RWPE1 (cell line): ENCODE measurements at regions of chr2 and their contacts with region 1.

Region 1: DNA sequence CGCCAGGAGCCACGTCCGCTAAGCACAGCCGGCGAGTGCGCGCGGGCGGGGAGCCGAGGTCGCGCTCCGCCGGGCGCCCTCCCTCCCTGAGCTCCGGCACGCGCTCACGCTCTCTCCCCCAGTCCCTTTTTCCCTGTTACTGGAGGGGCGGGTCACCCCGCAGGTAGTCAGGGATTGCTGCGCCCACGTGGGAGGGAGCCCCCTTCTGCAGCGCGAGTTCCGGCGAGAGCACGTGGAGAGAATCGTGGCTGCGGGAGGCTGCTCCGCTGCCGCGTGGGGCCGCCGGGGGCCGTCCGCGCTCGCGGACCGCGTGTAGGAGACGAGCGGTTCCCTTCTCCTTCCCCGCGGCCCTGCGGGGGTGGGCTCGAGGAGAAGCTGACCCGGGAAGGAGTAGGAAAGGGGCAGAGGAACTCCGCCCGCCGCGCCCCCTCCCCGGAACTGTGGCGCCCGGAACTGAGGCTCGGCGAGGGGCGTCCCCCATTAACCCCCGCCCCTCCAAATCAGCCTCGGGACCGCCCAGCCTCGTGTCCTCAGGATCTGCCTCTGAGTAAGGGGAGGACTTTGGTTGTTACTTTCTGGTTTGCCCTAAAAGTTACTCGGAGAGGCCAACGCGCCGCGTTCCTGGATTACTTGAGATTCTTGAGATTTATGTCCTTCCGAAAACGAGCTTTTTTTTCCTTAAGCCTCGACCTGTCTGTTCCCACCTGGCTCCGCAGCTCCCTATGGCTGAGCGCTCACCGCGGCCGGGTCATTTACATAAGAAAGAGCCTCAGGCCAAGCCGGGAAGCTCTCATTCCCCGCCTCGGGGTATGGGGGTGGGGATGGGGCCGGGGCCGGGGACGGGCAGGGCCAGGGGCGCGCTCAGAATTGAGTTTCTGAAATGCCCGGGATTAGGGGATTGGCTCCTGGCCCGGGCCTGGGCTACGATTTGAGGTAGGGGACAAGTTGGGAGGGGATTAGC is 1.1 kb downstream of the HK2 start:
- DNase-seq: peak; percentile 78
- H3K27ac ChIP-seq: peak overlapping the region; percentile 80
- CTCF ChIP-seq: no peak

Region 2: DNA sequence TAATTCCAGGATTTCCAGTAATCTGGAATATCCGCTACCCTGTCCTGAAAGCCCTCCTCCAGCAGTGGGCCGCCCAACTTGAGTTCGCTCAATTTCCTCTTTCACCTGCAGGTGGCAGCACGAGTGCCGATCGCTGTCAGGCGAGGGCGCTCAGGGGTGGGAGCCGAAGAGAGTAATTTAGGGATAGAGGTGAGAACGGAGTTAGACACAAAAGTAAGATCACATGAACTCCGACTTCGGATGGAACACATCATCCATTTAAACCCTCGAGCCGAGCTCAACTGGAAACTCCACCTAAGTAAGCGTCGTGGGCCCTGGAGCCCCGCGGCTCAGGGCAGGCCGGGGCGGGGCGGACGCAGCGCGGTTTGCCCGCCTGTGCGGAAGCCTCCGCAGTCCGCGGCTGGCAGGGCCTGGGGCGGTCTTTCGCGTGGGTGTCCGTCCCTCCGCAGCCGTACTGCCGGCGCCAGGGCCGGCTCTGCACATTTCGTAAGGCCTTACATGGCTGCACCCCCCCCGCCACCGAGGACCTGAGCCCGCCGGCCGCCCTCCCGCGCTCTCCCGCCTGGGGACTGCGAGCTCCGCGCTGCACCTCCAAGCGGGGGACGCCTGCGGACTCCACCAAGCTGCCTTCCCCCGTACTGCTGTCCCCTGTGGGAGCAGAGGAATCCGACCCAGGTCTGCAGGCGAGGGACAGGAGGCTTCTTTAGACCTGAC is 119.8 kb before region 1 on chr2:
- CTCF ChIA-PET with region 1: interaction called, 20 read pairs
- POLR2A ChIA-PET with region 1: no interaction called
- DNase-seq: peak; percentile 86
- H3K27ac ChIP-seq: peak overlapping the region; percentile 81
- CTCF ChIP-seq: peak; percentile 87